Left ventricle myocardium inferior (tissue), 1 donor: ENCODE measurements at regions of chr1 and their contacts with region 1.

Region 1: DNA sequence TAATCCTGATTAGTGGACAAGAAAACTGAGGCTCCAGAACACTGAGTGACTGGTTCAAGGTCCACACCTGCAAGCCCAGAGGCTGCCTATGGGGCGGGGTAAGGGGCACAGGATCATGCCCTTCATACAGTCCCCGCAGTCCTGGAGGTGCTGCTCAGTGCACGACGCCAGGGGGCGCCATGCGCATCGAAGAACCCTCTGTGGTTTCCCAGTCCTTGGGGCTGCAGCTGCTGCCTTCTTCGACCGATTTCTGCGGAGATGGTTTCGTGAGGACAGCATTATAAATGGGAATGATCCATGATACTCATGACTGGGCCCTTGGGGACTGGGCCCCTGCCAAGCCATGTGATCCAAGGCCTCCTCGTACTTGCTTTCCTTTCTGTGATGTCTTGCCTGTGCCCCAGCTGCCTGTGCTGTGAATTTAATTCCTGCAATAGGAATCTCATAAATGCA is 37.1 kb upstream of the ARHGEF10L start:
- DNase-seq: peak; percentile 85
- H3K4me3 ChIP-seq: no peak overlapping the region
- H3K27ac ChIP-seq: peak overlapping the region; percentile 22
- H3K4me1 ChIP-seq: peaks cover 13% of the 10 kb centered on the region
- H3K27me3 ChIP-seq: no peaks in the 10 kb centered on the region
- CTCF ChIP-seq: peak; percentile 90

Region 2: DNA sequence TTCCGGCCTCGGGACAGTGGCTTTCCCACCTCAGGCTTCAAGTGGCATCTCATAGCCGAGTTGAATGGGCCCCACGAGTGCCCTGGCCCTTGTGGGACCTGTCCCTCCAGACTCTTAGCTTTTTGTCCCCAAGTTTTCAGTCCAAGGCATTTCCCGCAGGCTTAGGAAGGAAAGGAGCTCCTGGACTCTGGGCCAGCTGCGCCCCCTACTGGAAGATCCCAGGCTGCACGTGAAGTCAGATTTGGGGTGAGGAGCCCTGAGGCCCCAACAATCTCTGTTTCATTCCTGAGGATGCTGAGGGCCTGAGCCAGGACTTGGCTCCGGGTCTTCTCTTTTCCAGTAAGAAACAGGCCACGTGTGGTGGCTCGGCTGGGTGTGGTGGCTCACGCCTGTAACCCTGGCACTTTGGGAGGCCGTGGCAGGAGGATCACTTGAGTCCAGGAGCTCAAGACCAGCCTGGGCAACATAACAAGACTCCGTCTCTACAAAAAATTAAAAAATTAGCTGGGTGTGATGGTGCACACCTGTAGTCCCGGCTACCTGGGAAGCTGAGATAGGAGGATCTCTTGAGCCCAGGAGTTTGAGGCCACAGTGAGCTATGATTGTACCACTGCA is 104.6 kb after region 1 on chr1:
- intact Hi-C with region 1: loop called (anchors 2 kb)
- DNase-seq: peak; percentile 73
- H3K4me3 ChIP-seq: no peak overlapping the region
- H3K27ac ChIP-seq: peak overlapping the region; percentile 89
- H3K4me1 ChIP-seq: peaks cover 28% of the 10 kb centered on the region
- H3K27me3 ChIP-seq: no peaks in the 10 kb centered on the region
- CTCF ChIP-seq: peak; percentile 91